Lower leg skin (tissue), 4 donors: ENCODE measurements at regions of chr6 and their contacts with region 1.

Region 1: DNA sequence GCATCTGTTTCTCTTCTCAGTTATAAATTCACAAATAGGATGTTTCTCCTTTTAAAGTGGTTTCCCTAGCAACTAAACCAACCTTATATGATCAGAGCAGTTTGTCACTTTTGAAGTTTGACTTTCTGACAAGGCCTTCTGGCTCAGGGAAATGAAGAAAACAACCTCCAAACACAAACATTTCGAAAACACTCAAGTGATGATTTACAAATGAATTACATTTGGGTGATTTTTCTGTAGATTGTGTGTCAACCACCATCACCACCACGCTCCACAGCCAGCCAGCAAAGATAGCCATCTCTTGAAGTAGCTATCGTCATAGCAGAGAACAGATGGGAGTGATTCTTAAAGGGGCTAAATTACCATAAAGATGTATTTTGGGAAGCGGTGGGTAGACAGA is 16.5 kb upstream of the MLIP start:
- DNase-seq: no peak
- H3K4me3 ChIP-seq: no peak overlapping the region
- CTCF ChIP-seq: no peak
- POLR2A ChIP-seq: no peak

Region 2: GRCh38 chr6:52994839-52995088 is 1100.0 kb before region 1 on chr6:
- intact Hi-C with region 1: loop called (anchors 5 kb)
- DNase-seq: peak in 1 of 2 donors; percentile 91
- H3K4me3 ChIP-seq: peak overlapping the region; percentile 86
- CTCF ChIP-seq: no peak
- POLR2A ChIP-seq: no peak

Region 3: GRCh38 chr6:53926525-53926924 is 168.3 kb before region 1 on chr6:
- intact Hi-C with region 1: no loop called
- DNase-seq: no peak
- H3K4me3 ChIP-seq: no peak overlapping the region
- CTCF ChIP-seq: no peak
- POLR2A ChIP-seq: no peak

Region 4: DNA sequence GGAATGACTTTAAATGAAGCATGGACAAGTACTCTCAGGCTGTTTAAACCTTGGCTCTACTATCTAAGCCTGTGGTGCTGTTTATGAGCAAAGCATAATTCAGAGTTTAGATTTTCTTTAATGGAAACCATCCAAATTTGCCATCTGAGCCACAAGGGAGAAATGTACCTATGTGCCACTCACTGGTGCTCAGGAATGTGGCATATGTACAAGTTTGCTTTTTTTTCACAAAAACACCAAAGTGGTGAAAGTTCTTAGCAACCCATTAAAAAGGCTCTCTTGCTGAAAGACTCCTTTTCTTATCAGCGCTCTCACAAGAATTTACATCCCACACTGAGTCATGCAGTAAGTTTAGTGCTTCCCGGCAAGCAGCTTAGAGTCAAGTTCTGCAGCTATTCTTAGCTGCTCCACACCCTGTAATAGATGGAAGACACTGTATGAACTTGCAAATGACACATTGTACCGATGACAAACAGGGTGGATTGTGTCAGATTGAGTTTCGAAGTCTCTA is 40.9 kb before region 1 on chr6:
- intact Hi-C with region 1: no loop called
- DNase-seq: peak in 1 of 2 donors; percentile 60
- H3K4me3 ChIP-seq: no peak overlapping the region
- CTCF ChIP-seq: no peak
- POLR2A ChIP-seq: no peak

Region 5: GRCh38 chr6:55198708-55199107 is 1103.9 kb after region 1 on chr6:
- intact Hi-C with region 1: no loop called
- DNase-seq: no peak
- H3K4me3 ChIP-seq: no peak overlapping the region
- CTCF ChIP-seq: no peak
- POLR2A ChIP-seq: no peak